B cell (primary cell): ENCODE measurements at regions of chr1 and their contacts with region 1.

Region 1: DNA sequence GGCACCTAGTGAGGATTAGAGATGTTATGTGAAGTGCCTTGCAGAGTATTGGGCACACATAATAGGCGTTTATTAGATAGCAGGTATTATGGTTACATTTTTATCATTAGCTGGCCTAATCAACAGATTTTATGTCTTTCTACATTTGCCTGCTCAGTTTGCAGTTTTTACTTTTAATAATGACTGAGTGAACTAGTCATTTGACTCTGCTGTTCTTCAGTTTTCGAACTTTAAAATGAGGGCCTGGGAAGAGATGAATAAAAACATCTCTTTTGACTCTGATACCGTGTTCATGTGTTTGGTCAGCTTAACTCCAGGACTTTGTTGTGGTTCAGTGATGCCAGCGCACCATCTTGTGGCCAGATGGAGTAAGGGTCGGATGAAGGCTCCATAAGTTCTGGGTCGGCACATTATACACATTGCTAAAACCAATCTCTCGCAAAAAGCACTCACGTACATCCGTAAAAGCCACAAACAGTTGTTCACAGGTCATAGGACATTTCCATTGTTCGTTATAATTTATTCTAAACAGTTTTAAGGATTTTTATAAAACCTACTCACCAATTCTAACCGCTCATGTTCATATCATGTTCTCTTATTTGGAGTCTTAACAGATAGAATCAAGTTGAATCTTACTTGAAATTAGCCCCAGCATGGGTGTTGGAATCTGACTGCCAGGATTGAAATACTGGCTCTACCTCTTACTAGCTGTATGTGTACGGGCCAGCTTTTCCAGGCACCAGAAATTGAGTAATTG is 78.4 kb upstream of the GPR88 start:
- DNase-seq: peak; percentile 73
- ATAC-seq: peak; percentile 80
- H3K4me3 ChIP-seq: no peak overlapping the region
- H3K4me3 Mint-ChIP-seq: no peak overlapping the region
- H3K27ac ChIP-seq: no peak overlapping the region
- H3K27ac Mint-ChIP-seq: peak overlapping the region; percentile 2
- H3K4me1 ChIP-seq: peaks cover 13 to 17% of the 10 kb centered on the region in 2 donors
- H3K4me1 Mint-ChIP-seq: peaks cover 18% of the 10 kb centered on the region
- H3K27me3 ChIP-seq: no peaks in the 10 kb centered on the region
- H3K27me3 Mint-ChIP-seq: no peaks in the 10 kb centered on the region
- CTCF ChIP-seq: peak; percentile 85

Region 2: DNA sequence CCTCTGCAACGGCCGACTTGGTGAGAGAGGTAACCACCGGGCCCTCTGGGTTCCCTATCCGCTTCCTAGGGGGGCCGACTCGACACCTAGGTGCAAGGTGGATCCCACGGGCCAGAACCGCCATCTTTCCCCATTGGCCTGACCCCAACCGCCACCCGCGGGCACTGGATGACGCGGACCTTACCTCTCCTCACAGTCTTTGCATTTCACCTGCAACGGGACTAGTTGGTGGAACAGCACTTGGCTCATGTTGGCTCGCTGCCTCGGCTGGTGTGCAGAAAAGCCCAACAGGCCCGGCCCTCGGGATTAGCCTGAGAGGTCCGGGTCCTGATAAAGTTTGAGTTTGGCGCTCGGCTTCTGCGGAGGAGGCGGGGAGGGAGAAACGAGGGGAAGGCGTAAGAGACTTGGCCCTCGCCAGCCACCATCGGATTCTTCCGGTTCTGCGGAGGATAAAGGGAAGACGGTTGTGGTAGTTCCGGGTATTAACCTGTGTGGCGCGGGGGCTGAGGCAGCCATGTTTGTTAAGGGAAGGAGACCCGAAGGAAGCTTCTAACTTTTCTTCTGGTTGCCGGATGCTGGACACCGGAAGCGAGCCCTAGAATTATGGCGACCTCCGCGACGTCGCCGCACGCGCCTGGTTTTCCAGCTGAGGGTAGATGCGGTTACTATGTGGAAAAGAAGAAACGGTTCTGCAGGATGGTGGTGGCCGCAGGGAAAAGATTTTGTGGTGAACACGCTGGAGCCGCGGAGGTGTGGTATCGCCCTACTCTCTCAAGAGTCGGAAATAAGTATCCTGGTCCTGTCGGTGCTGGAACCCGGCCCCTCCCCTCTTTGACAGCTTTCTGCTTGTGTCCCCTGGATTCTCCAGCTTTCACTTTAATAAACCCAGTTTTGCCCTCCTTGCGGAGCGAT is 326.7 kb before region 1 on chr1 and contains the starts of genes SASS6 and TRMT13:
- CTCF ChIA-PET with region 1: interaction called, 4 read pairs
- POLR2A ChIA-PET with region 1: no interaction called
- intact Hi-C with region 1: loop called (anchors 5 kb)
- DNase-seq: peak; percentile 96
- ATAC-seq: peak; percentile 98
- H3K4me3 ChIP-seq: peak within 1 kb of the TSS; percentile 81 to 95 (median 87)
- H3K4me3 Mint-ChIP-seq: peak within 1 kb of the TSS; percentile 98
- H3K27ac ChIP-seq: peak within 1 kb of the TSS; percentile 59 to 72
- H3K27ac Mint-ChIP-seq: peak within 1 kb of the TSS; percentile 96
- H3K4me1 ChIP-seq: peaks cover 18 to 20% of the 10 kb centered on the region in 2 donors
- H3K4me1 Mint-ChIP-seq: peaks cover 37% of the 10 kb centered on the region
- H3K27me3 ChIP-seq: no peaks in the 10 kb centered on the region
- H3K27me3 Mint-ChIP-seq: no peaks in the 10 kb centered on the region
- CTCF ChIP-seq: no peak
- total RNA-seq, gene SASS6: 7.0 and 8.0 TPM in 2 replicates
- total RNA-seq, gene TRMT13: 40.1 and 41.5 TPM in 2 replicates

Region 3: DNA sequence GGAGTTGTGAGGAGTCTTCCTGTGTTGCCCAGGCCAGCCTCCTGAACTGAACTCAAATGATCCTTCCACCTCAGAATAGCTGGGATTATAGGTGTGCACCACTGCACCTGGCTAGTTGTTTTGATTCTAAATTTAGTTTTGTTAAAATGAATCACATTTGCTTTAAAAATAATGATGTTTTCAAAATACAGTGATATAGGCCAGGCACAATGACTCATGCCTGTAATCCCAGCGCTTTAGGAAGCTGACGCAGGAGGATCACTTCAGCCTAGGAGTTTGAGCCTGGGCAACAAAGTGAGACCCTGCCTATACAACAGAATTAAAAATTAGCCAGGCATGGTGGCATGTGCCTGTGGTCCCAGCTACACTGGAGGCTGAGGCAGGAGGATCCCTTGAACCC is 169.2 kb before region 1 on chr1:
- CTCF ChIA-PET with region 1: interaction called, 14 read pairs
- POLR2A ChIA-PET with region 1: no interaction called
- intact Hi-C with region 1: no loop called
- DNase-seq: no peak
- ATAC-seq: no peak
- H3K4me3 ChIP-seq: no peak overlapping the region
- H3K4me3 Mint-ChIP-seq: no peak overlapping the region
- H3K27ac ChIP-seq: no peak overlapping the region
- H3K27ac Mint-ChIP-seq: no peak overlapping the region
- H3K4me1 ChIP-seq: no peaks in the 10 kb centered on the region
- H3K4me1 Mint-ChIP-seq: no peaks in the 10 kb centered on the region
- H3K27me3 ChIP-seq: no peaks in the 10 kb centered on the region
- H3K27me3 Mint-ChIP-seq: no peaks in the 10 kb centered on the region
- CTCF ChIP-seq: no peak

Region 4: GRCh38 chr1:100382657-100383056 is 76.9 kb before region 1 on chr1:
- CTCF ChIA-PET with region 1: interaction called, 10 read pairs
- POLR2A ChIA-PET with region 1: no interaction called
- intact Hi-C with region 1: no loop called
- DNase-seq: no peak
- ATAC-seq: no peak
- H3K4me3 ChIP-seq: no peak overlapping the region
- H3K4me3 Mint-ChIP-seq: no peak overlapping the region
- H3K27ac ChIP-seq: no peak overlapping the region
- H3K27ac Mint-ChIP-seq: no peak overlapping the region
- H3K4me1 ChIP-seq: peaks cover 23 to 30% of the 10 kb centered on the region in 2 donors
- H3K4me1 Mint-ChIP-seq: peaks cover 43% of the 10 kb centered on the region
- H3K27me3 ChIP-seq: no peaks in the 10 kb centered on the region
- H3K27me3 Mint-ChIP-seq: no peaks in the 10 kb centered on the region
- CTCF ChIP-seq: no peak

Region 5: GRCh38 chr1:100469578-100469977 is 10.0 kb after region 1 on chr1:
- CTCF ChIA-PET with region 1: interaction called, 18 read pairs
- POLR2A ChIA-PET with region 1: no interaction called
- intact Hi-C with region 1: no loop called
- DNase-seq: no peak
- ATAC-seq: no peak
- H3K4me3 ChIP-seq: no peak overlapping the region
- H3K4me3 Mint-ChIP-seq: no peak overlapping the region
- H3K27ac ChIP-seq: no peak overlapping the region
- H3K27ac Mint-ChIP-seq: no peak overlapping the region
- H3K4me1 ChIP-seq: no peaks in the 10 kb centered on the region
- H3K4me1 Mint-ChIP-seq: no peaks in the 10 kb centered on the region
- H3K27me3 ChIP-seq: no peaks in the 10 kb centered on the region
- H3K27me3 Mint-ChIP-seq: no peaks in the 10 kb centered on the region
- CTCF ChIP-seq: no peak

Region 6: DNA sequence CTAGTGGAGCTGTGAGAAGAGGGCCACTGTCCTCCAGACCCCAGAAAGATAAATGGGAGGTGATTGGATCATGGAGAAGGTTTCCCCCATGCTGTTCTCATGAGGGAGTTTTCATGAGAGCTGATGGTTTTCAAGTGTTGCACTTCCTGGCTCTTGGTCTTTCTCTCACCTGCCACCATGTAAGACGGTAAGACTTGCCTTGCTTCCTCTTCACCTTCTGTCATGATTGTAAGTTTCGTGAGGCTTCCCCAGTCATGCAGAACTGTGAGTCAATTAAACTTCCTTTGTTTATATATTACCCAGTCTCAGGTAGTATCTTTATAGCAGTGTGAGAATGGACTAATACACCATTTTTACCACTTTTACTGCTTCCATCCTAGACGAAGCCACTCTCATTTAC is 106.0 kb after region 1 on chr1:
- CTCF ChIA-PET with region 1: no interaction called
- POLR2A ChIA-PET with region 1: no interaction called
- intact Hi-C with region 1: no loop called
- DNase-seq: peak; percentile 9
- ATAC-seq: no peak
- H3K4me3 ChIP-seq: no peak overlapping the region
- H3K4me3 Mint-ChIP-seq: no peak overlapping the region
- H3K27ac ChIP-seq: no peak overlapping the region
- H3K27ac Mint-ChIP-seq: no peak overlapping the region
- H3K4me1 ChIP-seq: no peaks in the 10 kb centered on the region
- H3K4me1 Mint-ChIP-seq: peaks cover 9% of the 10 kb centered on the region
- H3K27me3 ChIP-seq: peaks cover 0 to 6% (median 0%) of the 10 kb centered on the region in 4 experiments
- H3K27me3 Mint-ChIP-seq: peaks cover 32% of the 10 kb centered on the region
- CTCF ChIP-seq: no peak

Region 7: GRCh38 chr1:101407505-101408211 is 948.1 kb after region 1 on chr1:
- CTCF ChIA-PET with region 1: no interaction called
- POLR2A ChIA-PET with region 1: no interaction called
- intact Hi-C with region 1: no loop called
- DNase-seq: peak; percentile 75
- ATAC-seq: peak; percentile 70
- H3K4me3 ChIP-seq: peak overlapping the region in 1 of 5 experiments; percentile 21
- H3K4me3 Mint-ChIP-seq: peak overlapping the region; percentile 46
- H3K27ac ChIP-seq: peak overlapping the region; percentile 49 to 70
- H3K27ac Mint-ChIP-seq: peak overlapping the region; percentile 74
- H3K4me1 ChIP-seq: peaks cover 58 to 63% of the 10 kb centered on the region in 2 donors
- H3K4me1 Mint-ChIP-seq: peaks cover 66% of the 10 kb centered on the region
- H3K27me3 ChIP-seq: no peaks in the 10 kb centered on the region
- H3K27me3 Mint-ChIP-seq: no peaks in the 10 kb centered on the region
- CTCF ChIP-seq: no peak